ENCODE measurements at regions of chr1 and their contacts with region 1.

Region 1: GRCh38 chr1:20786253-20787028 is 666 bp downstream of the HP1BP3 start:
- DNase-seq: peak; percentile 95
- ATAC-seq: peak; percentile 80
- H3K4me3 ChIP-seq: peak overlapping the region; percentile 88 to 99 (median 92)
- H3K27ac ChIP-seq: peak overlapping the region; percentile 99
- H3K4me1 ChIP-seq: peaks cover 41% of the 10 kb centered on the region
- H3K27me3 ChIP-seq: no peaks in the 10 kb centered on the region; a peak in 1 of 5 replicates
- CTCF ChIP-seq: 0 out of 2 replicates have a peak, but pooled peaks have one; percentile 15
- EP300 ChIP-seq: no peak
- POLR2A ChIP-seq: peak; percentile 67 to 86
- RAD21 ChIP-seq: peak; percentile 64

Region 2: GRCh38 chr1:20661207-20662109 is 125.0 kb before region 1 on chr1 and contains the start of gene DDOST:
- CTCF ChIA-PET with region 1: no interaction called
- POLR2A ChIA-PET with region 1: interaction called, 13 read pairs
- in situ Hi-C with region 1: no loop called
- intact Hi-C with region 1: no loop called
- DNase-seq: peak; percentile 98
- ATAC-seq: peak; percentile 95
- H3K4me3 ChIP-seq: peak within 1 kb of the TSS; percentile 77 to 98 (median 89)
- H3K27ac ChIP-seq: peak within 1 kb of the TSS; percentile 66
- H3K4me1 ChIP-seq: peaks cover 47% of the 10 kb centered on the region
- H3K27me3 ChIP-seq: no peaks in the 10 kb centered on the region; a peak in 1 of 5 replicates
- CTCF ChIP-seq: peak; percentile 76
- EP300 ChIP-seq: no peak
- POLR2A ChIP-seq: peak; percentile 62 to 84; a peak in 3 of 4 replicates
- RAD21 ChIP-seq: no peak
- total RNA-seq, gene DDOST: 167 and 335 TPM in 2 replicates

Region 3: GRCh38 chr1:20896871-20897223 is 110.4 kb after region 1 on chr1:
- CTCF ChIA-PET with region 1: no interaction called
- POLR2A ChIA-PET with region 1: no interaction called
- in situ Hi-C with region 1: no loop called
- intact Hi-C with region 1: loop called (anchors 10 kb)
- DNase-seq: peak; percentile 92
- ATAC-seq: peak; percentile 92
- H3K4me3 ChIP-seq: no peak overlapping the region
- H3K27ac ChIP-seq: peak overlapping the region; percentile 44
- H3K4me1 ChIP-seq: peaks cover 18% of the 10 kb centered on the region; the same call in 1 of the 2 replicates
- H3K27me3 ChIP-seq: no peaks in the 10 kb centered on the region
- CTCF ChIP-seq: no peak
- EP300 ChIP-seq: peak in 1 of 2 experiments; percentile 53; a peak in 1 of 4 replicates
- POLR2A ChIP-seq: no peak
- RAD21 ChIP-seq: no peak

Region 4: DNA sequence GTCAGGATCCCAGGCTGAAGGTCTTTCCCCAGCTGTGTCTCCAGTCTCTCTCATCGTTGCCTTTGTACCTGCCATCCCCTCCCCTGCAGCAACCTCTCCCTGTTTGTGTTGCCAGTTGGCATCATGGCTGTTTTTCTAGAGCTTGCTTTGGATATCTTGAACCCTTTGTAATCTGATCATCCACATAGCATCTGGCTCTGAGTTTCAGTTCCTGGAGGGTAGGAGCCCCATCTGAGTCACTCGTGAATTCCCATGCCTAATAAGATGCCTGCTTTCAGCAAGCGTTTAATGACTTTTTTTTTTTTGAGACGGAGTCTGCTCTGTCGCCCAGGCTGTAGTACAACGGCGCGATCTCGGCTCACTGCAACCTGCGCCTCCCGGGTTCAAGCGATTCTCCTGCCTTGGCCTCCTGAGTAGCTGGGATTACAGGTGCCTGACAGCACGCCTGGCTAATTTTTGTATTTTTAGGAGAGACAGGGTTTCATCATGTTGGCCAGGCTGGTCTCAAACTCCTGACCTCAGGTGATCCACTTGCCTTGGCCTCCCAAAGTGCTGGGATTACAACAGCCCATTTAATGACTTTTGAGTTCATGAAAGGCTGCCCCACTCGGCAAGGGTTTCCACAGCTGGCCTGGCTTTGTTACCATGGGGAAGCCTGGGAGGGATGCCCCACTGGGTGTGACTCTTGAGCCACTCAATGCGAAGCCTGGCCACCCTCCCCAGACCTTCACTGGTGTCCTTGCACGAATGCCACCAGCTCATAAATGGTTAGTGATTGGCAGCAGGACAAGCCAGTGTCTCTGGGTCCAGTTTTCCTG is 734.7 kb after region 1 on chr1:
- CTCF ChIA-PET with region 1: no interaction called
- POLR2A ChIA-PET with region 1: no interaction called
- in situ Hi-C with region 1: no loop called
- intact Hi-C with region 1: no loop called
- DNase-seq: no peak
- ATAC-seq: no peak
- H3K4me3 ChIP-seq: no peak overlapping the region
- H3K27ac ChIP-seq: no peak overlapping the region
- H3K4me1 ChIP-seq: peaks cover 16% of the 10 kb centered on the region
- H3K27me3 ChIP-seq: peaks cover 0 to 33% of the 10 kb centered on the region in 2 experiments; a peak in 1 of 5 replicates
- CTCF ChIP-seq: no peak
- EP300 ChIP-seq: no peak
- POLR2A ChIP-seq: no peak
- RAD21 ChIP-seq: no peak

Measured in HepG2 (cell line).